B cell (primary cell): ENCODE measurements at regions of chr17 and their contacts with region 1.

Region 1: DNA sequence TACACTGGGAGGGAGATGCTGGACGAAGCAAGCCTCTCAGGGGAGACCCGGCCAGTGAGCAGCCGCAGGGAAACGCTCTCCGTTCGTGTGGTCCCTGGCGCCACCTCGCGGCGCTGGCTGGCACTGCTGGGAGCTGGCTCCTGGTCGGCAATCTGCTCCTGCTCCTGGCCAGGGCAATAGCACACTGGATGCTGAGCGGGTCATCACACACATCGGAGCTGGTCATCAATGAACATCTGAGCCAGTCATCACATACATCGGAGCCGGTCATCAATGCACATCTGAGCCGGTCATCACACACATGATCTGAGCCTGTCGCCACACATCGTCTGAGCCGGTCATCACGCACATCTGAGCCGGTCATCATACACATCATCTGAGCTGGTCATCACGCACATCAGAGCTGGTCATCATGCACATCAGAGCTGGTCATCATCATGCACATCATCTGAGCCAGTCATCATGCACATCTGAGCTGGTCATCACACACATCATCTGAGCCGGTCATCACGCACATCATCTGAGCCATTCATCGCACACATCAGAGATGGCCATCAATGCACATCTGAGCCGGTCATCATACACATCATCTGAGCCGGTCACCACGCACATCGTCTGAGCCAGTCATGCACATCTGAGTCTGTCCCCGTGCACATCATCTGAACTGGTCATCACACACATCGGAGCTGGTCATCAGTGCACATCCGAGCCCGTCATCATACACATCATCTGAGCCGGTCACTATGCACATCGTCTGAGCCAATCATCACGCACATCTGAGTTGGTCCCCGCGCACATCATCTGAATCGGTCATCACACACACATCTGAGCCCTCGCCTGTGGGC is 217.3 kb downstream of the RBFOX3 start:
- DNase-seq: peak; percentile 83
- ATAC-seq: peak; percentile 83
- H3K4me3 ChIP-seq: no peak overlapping the region
- H3K4me3 Mint-ChIP-seq: no peak overlapping the region
- H3K27ac ChIP-seq: no peak overlapping the region
- H3K27ac Mint-ChIP-seq: peak overlapping the region; percentile 17
- H3K4me1 ChIP-seq: peaks cover 0 to under 1% of the 10 kb centered on the region in 2 donors
- H3K4me1 Mint-ChIP-seq: peaks cover 3% of the 10 kb centered on the region
- H3K27me3 ChIP-seq: peaks cover 0 to 53% (median 10%) of the 10 kb centered on the region in 4 experiments
- H3K27me3 Mint-ChIP-seq: peaks cover 57% of the 10 kb centered on the region
- CTCF ChIP-seq: peak; percentile 96

Region 2: DNA sequence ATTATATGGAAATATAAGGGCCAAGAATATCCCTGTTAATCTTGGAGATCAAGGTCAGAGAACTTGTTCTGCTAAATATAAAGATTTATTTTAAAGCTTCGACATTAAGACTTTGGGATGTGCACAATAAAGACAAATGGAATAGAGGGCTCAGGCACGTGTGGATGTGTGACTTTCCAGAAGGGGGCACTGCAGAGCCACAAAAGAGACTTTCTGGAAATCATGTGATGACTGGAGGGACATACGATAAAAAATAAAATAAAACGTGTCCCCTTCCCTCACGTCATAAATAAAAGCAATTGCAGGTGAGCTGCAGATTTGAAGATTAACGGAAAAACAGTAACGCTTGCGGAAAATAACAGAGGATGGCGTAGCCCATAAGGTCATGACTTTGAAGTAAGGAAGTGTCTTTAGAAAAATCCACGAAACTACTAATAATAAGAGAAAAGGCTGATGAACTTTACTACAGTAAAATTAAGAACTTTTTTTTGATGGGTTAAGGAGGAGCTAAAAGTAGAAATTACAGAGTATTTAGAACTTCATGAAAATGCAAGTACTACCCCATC is 328.4 kb before region 1 on chr17:
- CTCF ChIA-PET with region 1: interaction called, 21 read pairs
- POLR2A ChIA-PET with region 1: no interaction called
- intact Hi-C with region 1: no loop called
- DNase-seq: peak; percentile 50
- ATAC-seq: no peak
- H3K4me3 ChIP-seq: no peak overlapping the region
- H3K4me3 Mint-ChIP-seq: no peak overlapping the region
- H3K27ac ChIP-seq: no peak overlapping the region
- H3K27ac Mint-ChIP-seq: no peak overlapping the region
- H3K4me1 ChIP-seq: no peaks in the 10 kb centered on the region
- H3K4me1 Mint-ChIP-seq: peaks cover 3% of the 10 kb centered on the region
- H3K27me3 ChIP-seq: no peaks in the 10 kb centered on the region
- H3K27me3 Mint-ChIP-seq: peaks cover 12% of the 10 kb centered on the region
- CTCF ChIP-seq: peak; percentile 56

Region 3: DNA sequence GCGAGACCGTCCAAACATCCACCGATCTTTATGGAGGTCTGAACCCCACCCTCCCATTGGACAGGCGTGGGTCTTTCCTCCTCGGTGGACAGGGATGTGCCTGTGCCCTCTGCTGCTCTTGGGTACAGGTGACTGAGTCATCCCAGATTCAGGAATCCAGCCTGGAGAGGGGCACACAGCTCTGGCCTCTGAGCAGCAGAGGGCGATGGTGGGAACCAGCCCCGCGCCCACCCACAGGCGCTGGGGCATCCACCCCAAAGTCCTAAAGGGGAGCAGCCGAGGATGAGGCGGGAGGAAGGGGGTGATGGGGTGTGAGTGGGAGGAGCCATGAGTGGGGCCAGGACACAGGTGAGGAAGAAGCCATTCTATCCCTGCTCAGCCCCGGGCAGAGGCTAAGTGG is 284.0 kb before region 1 on chr17:
- CTCF ChIA-PET with region 1: interaction called, 50 read pairs
- POLR2A ChIA-PET with region 1: no interaction called
- intact Hi-C with region 1: no loop called
- DNase-seq: no peak
- ATAC-seq: no peak
- H3K4me3 ChIP-seq: no peak overlapping the region
- H3K4me3 Mint-ChIP-seq: no peak overlapping the region
- H3K27ac ChIP-seq: no peak overlapping the region
- H3K27ac Mint-ChIP-seq: no peak overlapping the region
- H3K4me1 ChIP-seq: no peaks in the 10 kb centered on the region
- H3K4me1 Mint-ChIP-seq: no peaks in the 10 kb centered on the region
- H3K27me3 ChIP-seq: peaks cover 0 to 2% (median 0%) of the 10 kb centered on the region in 4 experiments
- H3K27me3 Mint-ChIP-seq: peaks cover 5% of the 10 kb centered on the region
- CTCF ChIP-seq: no peak

Region 4: DNA sequence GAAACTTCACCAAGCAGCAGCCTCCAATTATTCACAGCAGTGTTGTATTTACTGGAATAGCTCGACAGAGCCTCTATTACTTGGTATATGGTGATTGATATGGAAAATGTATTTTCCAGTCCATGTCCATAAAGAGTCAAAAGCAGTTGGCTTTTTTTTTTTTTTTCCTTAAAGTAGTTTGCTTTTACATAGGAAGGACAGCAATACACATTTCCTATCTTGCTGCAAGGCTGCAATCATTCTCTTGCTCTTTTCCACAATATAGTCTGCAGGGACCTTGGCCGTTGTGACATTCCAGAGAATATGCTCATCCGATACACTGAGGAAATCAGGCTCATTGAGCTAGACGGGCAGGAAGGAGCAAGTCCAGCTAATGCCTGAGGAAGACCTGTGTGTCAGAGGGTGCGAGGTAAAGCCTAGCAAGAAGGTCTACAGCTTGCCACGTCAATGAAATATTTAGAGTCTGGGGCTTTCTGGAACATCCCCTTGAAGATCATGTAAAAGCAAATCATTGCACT is 187.8 kb before region 1 on chr17:
- CTCF ChIA-PET with region 1: interaction called, 13 read pairs
- POLR2A ChIA-PET with region 1: no interaction called
- intact Hi-C with region 1: no loop called
- DNase-seq: no peak
- ATAC-seq: no peak
- H3K4me3 ChIP-seq: no peak overlapping the region
- H3K4me3 Mint-ChIP-seq: no peak overlapping the region
- H3K27ac ChIP-seq: no peak overlapping the region
- H3K27ac Mint-ChIP-seq: no peak overlapping the region
- H3K4me1 ChIP-seq: no peaks in the 10 kb centered on the region
- H3K4me1 Mint-ChIP-seq: no peaks in the 10 kb centered on the region
- H3K27me3 ChIP-seq: peaks cover 0 to 5% (median 0%) of the 10 kb centered on the region in 4 experiments
- H3K27me3 Mint-ChIP-seq: peaks cover 31% of the 10 kb centered on the region
- CTCF ChIP-seq: no peak

Region 5: GRCh38 chr17:79325709-79326430 is 67.7 kb before region 1 on chr17:
- CTCF ChIA-PET with region 1: interaction called, 12 read pairs
- POLR2A ChIA-PET with region 1: no interaction called
- intact Hi-C with region 1: no loop called
- DNase-seq: no peak
- ATAC-seq: no peak
- H3K4me3 ChIP-seq: no peak overlapping the region
- H3K4me3 Mint-ChIP-seq: no peak overlapping the region
- H3K27ac ChIP-seq: no peak overlapping the region
- H3K27ac Mint-ChIP-seq: no peak overlapping the region
- H3K4me1 ChIP-seq: no peaks in the 10 kb centered on the region
- H3K4me1 Mint-ChIP-seq: no peaks in the 10 kb centered on the region
- H3K27me3 ChIP-seq: peaks cover 0 to 34% (median under 1%) of the 10 kb centered on the region in 4 experiments
- H3K27me3 Mint-ChIP-seq: peaks cover 62% of the 10 kb centered on the region
- CTCF ChIP-seq: no peak

Region 6: DNA sequence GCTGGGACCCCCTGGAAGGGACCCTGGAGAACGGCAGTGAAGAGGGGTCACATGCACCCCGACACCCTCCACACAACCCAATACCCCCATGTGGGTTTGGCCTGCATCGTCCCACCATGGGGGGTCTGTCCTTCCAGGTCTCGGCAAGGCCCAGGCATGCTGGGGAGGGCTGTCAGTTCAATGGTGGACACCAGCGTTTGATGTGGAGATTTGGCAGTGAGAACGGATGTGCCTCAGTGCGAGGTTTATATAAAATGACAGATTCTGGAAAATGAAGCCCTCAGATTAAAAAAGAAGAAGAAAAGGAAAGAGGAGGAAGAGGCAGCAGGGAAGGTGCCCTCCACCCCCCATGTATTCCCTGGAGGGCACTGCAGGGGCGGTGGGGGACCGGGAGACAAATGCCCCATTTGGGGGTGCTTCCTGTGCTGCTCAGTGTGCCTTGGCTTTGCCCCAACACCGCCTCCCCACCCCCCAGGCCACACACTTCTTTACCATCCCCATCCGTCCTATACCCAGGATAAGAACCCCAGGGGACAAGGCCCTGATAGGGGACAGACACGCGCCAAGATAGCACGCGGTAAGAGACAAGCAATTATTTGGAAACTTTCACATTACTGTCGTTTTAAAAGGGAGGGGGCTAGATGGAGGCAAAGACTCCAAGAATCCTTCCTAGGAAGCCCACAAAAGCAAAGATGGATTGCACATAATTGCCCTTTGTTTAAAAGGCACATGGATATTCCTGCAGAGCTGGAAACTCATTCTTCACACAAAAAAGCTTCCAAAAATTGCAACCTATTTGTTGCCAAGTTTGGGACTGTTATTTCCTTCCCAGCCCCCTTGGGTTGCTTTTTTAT is 196.3 kb after region 1 on chr17:
- CTCF ChIA-PET with region 1: no interaction called
- POLR2A ChIA-PET with region 1: no interaction called
- intact Hi-C with region 1: no loop called
- DNase-seq: no peak
- ATAC-seq: no peak
- H3K4me3 ChIP-seq: no peak overlapping the region
- H3K4me3 Mint-ChIP-seq: no peak overlapping the region
- H3K27ac ChIP-seq: no peak overlapping the region
- H3K27ac Mint-ChIP-seq: no peak overlapping the region
- H3K4me1 ChIP-seq: no peaks in the 10 kb centered on the region
- H3K4me1 Mint-ChIP-seq: no peaks in the 10 kb centered on the region
- H3K27me3 ChIP-seq: peaks cover 0 to 5% (median 1%) of the 10 kb centered on the region in 4 experiments
- H3K27me3 Mint-ChIP-seq: peaks cover 11% of the 10 kb centered on the region
- CTCF ChIP-seq: no peak

Region 7: GRCh38 chr17:79684132-79684985 is 290.8 kb after region 1 on chr17:
- CTCF ChIA-PET with region 1: no interaction called
- POLR2A ChIA-PET with region 1: no interaction called
- intact Hi-C with region 1: no loop called
- DNase-seq: no peak
- ATAC-seq: no peak
- H3K4me3 ChIP-seq: no peak overlapping the region
- H3K4me3 Mint-ChIP-seq: no peak overlapping the region
- H3K27ac ChIP-seq: no peak overlapping the region
- H3K27ac Mint-ChIP-seq: no peak overlapping the region
- H3K4me1 ChIP-seq: no peaks in the 10 kb centered on the region
- H3K4me1 Mint-ChIP-seq: no peaks in the 10 kb centered on the region
- H3K27me3 ChIP-seq: peaks cover 0 to 20% (median 0%) of the 10 kb centered on the region in 4 experiments
- H3K27me3 Mint-ChIP-seq: peaks cover 53% of the 10 kb centered on the region
- CTCF ChIP-seq: no peak